Activated naive CD4-positive, alpha-beta T cell treated with anti-CD3 and anti-CD28 coated beads for 36 hours (primary cell): ENCODE measurements at regions of chr14 and their contacts with region 1.

Region 1: GRCh38 chr14:32202998-32203882 is at the start of gene RNU6-8:
- DNase-seq: peak; percentile 86
- H3K4me3 Mint-ChIP-seq: peak within 1 kb of the TSS; percentile 89
- H3K27ac Mint-ChIP-seq: peak within 1 kb of the TSS; percentile 99
- H3K4me1 Mint-ChIP-seq: peaks cover 35% of the 10 kb centered on the region
- H3K27me3 Mint-ChIP-seq: no peaks in the 10 kb centered on the region
- total RNA-seq, gene RNU6-8: not detected

Region 2: DNA sequence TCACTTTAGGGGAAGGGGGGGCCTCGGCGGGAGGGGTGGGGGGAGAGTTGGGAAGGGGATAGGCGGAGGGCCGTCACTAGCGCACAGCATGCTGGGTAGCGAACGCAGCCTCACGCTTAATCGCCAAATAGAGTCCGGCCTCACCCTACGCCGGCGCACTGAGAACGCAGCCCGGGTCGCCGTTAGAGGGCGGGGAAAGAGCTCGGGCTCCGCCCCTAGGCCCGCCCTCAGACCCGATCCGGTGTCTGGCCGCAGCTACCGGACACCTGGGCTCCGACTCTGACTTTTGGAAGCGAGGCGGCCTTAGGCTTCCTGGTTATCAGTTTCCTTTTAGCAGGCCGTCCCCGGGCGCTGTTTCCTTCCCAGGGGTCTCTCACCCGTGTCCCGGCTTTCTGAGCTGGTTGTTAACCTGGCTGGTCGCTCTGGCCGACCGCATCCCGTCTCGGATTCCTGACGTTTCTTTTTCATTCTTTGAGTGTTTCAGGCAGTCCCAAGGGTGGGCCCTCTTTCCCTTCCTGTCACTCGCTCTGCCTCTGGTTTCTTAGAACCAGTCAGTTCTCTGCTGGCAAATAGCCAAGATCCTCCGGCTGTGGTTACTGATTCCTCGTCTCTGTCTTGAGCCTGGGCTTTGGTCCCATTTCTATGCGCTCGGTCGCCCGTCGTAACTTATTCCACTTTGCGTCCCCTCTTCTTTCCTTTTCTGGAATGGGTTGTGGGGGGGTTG is 1176.7 kb before region 1 on chr14:
- CTCF ChIA-PET with region 1: no interaction called
- intact Hi-C with region 1: loop called (anchors 2 kb)
- DNase-seq: peak; percentile 92
- H3K4me3 Mint-ChIP-seq: peak overlapping the region; percentile 96
- H3K27ac Mint-ChIP-seq: peak overlapping the region; percentile 96
- H3K4me1 Mint-ChIP-seq: peaks cover 55% of the 10 kb centered on the region
- H3K27me3 Mint-ChIP-seq: no peaks in the 10 kb centered on the region

Region 3: DNA sequence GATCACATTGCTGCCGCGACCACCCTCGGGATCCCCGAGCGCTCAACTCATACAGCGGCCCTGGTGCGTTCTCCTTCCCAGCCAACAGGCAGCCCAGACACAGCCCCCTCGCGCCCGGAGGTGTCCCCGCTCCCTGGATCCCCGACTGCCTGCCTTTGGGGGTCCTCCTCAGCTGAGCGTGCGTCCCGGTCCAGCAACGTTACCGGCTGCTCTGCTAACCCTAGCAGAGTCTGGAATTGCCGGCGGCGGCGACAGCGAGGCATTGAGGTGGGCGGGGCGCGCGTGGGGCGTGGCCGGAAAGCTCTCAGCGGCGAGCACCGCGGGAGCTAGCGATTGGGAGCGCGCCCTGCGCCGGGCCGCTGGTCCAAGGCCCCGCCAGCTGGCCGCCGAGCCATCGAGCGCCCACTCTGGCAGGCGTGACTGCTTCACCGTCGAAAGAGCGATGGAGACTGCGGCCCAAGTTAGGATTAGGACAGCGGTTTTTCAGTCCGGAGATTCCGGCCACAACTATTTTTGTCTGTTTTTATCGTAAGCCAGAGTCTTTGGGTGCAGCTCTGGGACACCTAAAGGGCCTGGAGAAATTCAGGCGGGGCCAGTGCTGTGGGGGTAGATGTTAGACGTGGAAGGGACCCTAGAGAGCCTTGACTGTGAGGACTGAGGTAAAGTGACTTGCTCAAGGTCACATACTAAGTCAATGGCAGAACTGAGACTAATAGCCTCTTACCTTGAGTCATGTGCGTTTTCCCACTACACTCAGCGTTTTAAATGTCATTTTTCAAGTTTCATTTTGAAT is 782.7 kb before region 1 on chr14 and contains the start of gene HEATR5A:
- CTCF ChIA-PET with region 1: no interaction called
- intact Hi-C with region 1: loop called (anchors 1 kb)
- DNase-seq: peak; percentile 90
- H3K4me3 Mint-ChIP-seq: peak within 1 kb of the TSS; percentile 91
- H3K27ac Mint-ChIP-seq: peak within 1 kb of the TSS; percentile 82
- H3K4me1 Mint-ChIP-seq: peaks cover 17% of the 10 kb centered on the region
- H3K27me3 Mint-ChIP-seq: no peaks in the 10 kb centered on the region
- total RNA-seq, gene HEATR5A: 3.5 to 6.0 TPM

Region 4: DNA sequence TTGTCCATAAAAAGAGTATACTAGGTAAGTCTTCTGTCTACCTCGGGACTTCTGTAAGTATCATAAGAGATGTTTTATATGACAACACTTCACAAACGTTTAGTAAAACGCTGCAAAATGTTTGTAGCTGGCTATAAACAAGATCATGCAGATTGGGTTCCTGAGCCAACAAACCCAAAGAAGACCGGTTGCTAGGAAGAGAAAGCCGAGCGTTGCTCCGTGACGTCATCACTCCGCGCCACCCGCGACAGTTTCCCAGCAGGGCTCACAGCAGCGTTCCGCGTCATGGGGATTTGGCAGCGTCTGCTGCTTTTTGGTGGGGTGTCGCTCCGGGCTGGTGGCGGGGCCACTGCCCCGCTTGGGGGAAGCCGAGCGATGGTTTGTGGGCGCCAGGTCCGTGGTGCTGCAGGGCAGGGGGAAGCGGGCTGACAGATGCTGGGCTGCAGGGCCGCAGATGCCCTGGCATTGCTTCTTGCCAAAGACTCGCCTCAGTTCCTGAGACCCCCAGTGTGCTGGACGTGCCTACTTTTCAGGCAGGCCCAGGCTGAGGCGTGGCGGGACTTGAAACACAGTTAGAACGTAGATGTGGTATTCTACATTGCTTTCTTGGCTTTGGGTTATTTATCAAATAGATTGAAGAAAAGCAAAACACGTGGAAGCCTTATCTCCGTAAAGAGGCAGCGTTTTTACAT is 641.9 kb before region 1 on chr14 and contains the start of gene NUBPL:
- CTCF ChIA-PET with region 1: no interaction called
- intact Hi-C with region 1: loop called (anchors 1 kb)
- DNase-seq: peak; percentile 98
- H3K4me3 Mint-ChIP-seq: peak within 1 kb of the TSS; percentile 96
- H3K27ac Mint-ChIP-seq: peak within 1 kb of the TSS; percentile 92
- H3K4me1 Mint-ChIP-seq: peaks cover 23% of the 10 kb centered on the region
- H3K27me3 Mint-ChIP-seq: no peaks in the 10 kb centered on the region
- total RNA-seq, gene NUBPL: 11.5 to 13.5 TPM

Region 5: DNA sequence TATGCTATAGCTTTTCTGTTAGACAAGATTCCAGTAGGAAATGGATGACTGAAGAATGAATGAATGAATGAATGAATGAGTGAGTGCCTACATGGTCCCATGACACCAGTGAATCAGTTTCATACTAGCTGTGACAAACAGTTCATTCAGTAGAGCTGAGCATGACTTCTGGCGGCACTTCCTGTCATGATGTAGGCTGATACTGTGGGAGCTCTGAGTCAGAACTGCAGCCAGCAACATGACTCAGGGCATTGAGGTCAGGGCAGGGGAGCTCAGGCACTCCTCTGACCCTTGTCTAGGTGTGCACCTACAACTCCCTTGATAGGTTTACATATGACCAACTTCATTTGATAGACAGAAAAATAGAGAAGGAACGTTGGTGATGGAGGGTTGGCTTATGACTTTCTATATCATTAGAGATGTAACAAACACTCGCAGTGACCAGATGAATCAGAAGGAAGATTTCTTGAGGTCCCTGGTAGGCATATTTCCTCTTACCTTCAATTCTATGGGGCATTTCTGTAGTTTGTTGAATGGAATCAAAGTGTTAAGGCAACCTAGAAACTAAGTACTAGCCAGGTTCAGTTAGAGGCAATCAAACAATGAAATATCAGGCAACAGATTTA is 265.4 kb before region 1 on chr14:
- CTCF ChIA-PET with region 1: interaction called, 3 read pairs
- intact Hi-C with region 1: loop called (anchors 1 kb)
- DNase-seq: peak; percentile 89
- H3K4me3 Mint-ChIP-seq: no peak overlapping the region
- H3K27ac Mint-ChIP-seq: peak overlapping the region; percentile 20
- H3K4me1 Mint-ChIP-seq: peaks cover 20% of the 10 kb centered on the region
- H3K27me3 Mint-ChIP-seq: no peaks in the 10 kb centered on the region

Region 6: GRCh38 chr14:32192712-32193373 is 10.4 kb before region 1 on chr14:
- CTCF ChIA-PET with region 1: interaction called, 3 read pairs
- intact Hi-C with region 1: loop called (anchors 1 kb)
- DNase-seq: peak; percentile 23
- H3K4me3 Mint-ChIP-seq: no peak overlapping the region
- H3K27ac Mint-ChIP-seq: no peak overlapping the region
- H3K4me1 Mint-ChIP-seq: peaks cover 14% of the 10 kb centered on the region
- H3K27me3 Mint-ChIP-seq: no peaks in the 10 kb centered on the region

Region 7: DNA sequence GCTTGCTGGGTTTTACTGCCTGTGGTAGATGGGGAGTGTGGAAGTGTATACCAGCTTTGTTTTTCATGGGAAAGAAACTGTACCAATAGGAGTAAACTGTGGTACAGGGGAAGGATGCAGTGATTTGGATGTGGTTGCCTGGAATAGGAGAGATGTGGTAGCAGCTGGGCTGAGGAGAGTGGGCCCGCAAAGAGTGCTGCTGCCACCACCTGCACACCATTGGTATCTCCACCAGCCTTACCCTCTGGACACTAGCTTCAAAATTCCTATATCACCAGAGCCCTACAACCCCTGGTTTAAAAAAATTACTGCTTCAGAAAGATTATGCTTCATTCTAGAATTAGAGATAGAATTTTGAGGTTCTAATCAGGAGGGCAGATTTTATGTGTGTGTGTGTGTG is 179.5 kb after region 1 on chr14:
- CTCF ChIA-PET with region 1: no interaction called
- intact Hi-C with region 1: loop called (anchors 5 kb)
- DNase-seq: no peak
- H3K4me3 Mint-ChIP-seq: no peak overlapping the region
- H3K27ac Mint-ChIP-seq: no peak overlapping the region
- H3K4me1 Mint-ChIP-seq: peaks cover 19% of the 10 kb centered on the region
- H3K27me3 Mint-ChIP-seq: no peaks in the 10 kb centered on the region